ENCODE measurements at regions of chr11 and their contacts with region 1.

Region 1: DNA sequence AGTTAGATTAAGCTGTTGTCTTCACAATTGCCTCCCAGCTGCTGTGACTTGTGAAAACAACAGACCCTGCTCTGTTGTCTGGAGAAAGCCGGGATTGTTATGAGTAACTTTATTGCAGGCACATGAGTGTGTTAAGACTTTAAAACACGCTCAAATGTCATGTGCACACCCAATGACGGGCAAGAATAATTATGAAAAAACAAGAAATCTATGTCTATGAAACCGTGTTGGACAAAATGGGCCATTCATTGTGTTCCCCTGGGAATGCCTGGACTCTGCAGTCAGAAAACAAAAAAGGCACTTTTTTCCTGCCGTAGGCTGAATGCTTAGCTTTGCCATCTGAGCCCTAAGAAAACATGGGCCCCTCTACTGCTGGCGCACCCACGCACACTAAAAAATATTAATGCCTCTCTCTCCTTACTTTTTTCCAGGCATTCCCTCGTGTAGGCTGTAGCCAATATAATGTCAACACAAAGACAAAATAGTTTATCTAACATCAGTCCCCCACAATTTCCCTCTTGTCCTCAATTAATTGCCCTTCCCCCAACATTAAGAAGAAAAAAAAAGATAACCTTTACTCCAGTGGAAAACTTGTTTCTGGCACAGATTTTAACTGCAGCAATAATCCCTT is 207.9 kb downstream of the SOX6 start:
- DNase-seq: no peak

Region 2: DNA sequence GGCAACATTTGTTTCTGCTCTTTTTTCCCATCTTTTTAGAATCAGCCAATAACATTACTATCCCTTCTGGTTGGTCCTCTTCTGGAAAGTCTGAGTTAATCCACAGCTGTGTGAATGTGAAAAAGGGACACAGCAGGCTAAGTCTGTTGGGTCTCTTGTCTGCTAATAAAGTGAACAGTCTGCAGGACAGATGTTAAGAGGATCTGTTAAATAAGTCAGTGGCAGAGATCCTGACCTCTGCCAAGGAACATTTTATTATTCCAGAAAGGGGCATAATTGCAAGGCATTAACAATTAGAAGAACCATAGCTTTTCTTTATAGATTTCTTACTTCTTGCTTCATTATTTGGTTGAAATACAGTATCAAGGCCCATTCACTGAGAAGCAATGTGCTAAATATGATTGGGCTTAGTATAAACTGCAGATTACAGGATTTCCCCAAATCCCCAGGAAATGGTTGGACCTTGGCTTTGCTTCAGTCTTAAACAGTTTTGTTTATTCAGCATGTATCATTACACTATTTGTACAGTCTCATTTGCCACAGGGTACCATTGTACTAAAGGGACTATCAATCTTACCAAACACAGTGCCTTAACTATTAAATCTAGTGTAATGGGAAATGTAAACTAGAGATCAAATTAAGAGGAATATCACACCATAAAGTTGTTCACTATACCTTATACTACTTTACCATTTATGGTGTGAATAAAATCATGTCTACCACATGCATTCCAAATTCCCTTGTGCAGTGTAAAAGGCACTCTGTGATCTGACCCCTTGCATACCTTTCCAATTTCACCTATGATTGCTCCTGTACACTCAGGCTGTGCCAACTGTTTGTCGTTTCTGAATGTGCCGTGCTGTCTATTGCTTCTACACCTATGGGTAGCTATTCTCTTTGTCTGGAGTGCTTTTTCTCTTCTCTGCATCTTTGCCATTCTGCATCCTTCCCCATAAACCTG is 66.0 kb before region 1 on chr11:
- intact Hi-C with region 1: loop called in 1 of 2 experiments (anchors 2 kb)
- DNase-seq: no peak

Measured in posterior vena cava (tissue), 2 donors.